ENCODE measurements at regions of chr16 and their contacts with region 1.

Region 1: DNA sequence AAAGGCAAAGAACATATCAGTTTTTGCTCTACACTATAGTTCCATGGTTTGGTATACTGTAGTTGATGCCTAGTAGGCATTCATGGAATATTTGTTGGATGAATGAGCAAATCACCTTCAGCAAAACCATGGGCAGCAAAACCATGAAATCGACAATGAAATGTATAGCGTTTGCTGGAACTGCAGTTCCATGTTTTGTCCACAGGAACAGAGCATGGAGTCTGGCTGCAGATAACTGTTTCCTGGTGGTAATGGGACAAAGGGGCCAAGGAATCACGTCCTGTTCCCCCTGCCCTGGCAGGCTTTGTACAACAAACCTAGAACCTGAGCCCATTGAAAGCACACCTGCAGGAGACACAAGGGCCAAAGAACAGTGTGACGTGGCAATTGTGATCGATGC is 101.1 kb downstream of the USP31 start:
- DNase-seq: no peak
- ATAC-seq: no peak
- H3K4me3 ChIP-seq: no peak overlapping the region
- H3K4me3 Mint-ChIP-seq: no peak overlapping the region
- H3K27ac ChIP-seq: no peak overlapping the region
- H3K27ac Mint-ChIP-seq: no peak overlapping the region
- H3K4me1 ChIP-seq: no peaks in the 10 kb centered on the region
- H3K4me1 Mint-ChIP-seq: no peaks in the 10 kb centered on the region
- H3K27me3 ChIP-seq: peaks cover 0 to 3% of the 10 kb centered on the region in 2 experiments
- H3K27me3 Mint-ChIP-seq: peaks cover 53% of the 10 kb centered on the region
- CTCF ChIP-seq: no peak

Region 2: DNA sequence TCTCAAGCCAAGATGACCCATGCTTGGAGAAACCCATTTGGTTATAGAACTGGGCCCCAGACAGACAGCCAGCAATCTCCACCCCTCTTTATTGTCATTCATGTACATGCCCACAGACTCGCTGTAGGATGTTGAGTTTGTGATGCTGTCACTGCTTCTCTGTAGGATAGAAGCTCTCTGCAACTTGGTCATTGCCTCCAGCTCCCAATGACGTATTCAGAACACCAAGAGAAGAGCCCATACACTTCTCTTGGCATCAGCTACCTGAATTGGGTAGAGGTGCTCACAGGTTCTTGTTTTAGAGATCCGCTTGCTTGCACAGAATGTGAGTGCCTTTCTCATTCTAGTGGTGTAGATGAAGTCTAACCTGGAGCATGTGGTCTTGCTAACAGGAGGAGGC is 218.2 kb before region 1 on chr16:
- CTCF ChIA-PET with region 1: no interaction called
- POLR2A ChIA-PET with region 1: no interaction called
- intact Hi-C with region 1: no loop called
- DNase-seq: no peak
- ATAC-seq: no peak
- H3K4me3 ChIP-seq: no peak overlapping the region
- H3K4me3 Mint-ChIP-seq: no peak overlapping the region
- H3K27ac ChIP-seq: no peak overlapping the region
- H3K27ac Mint-ChIP-seq: no peak overlapping the region
- H3K4me1 ChIP-seq: no peaks in the 10 kb centered on the region
- H3K4me1 Mint-ChIP-seq: no peaks in the 10 kb centered on the region
- H3K27me3 ChIP-seq: no peaks in the 10 kb centered on the region
- H3K27me3 Mint-ChIP-seq: peaks cover 22% of the 10 kb centered on the region
- CTCF ChIP-seq: no peak

Region 3: GRCh38 chr16:23026784-23027362 is 21.3 kb before region 1 on chr16:
- CTCF ChIA-PET with region 1: no interaction called
- POLR2A ChIA-PET with region 1: no interaction called
- intact Hi-C with region 1: loop called in 1 of 2 experiments (anchors 1 kb)
- DNase-seq: no peak
- ATAC-seq: no peak
- H3K4me3 ChIP-seq: no peak overlapping the region
- H3K4me3 Mint-ChIP-seq: no peak overlapping the region
- H3K27ac ChIP-seq: no peak overlapping the region
- H3K27ac Mint-ChIP-seq: no peak overlapping the region
- H3K4me1 ChIP-seq: no peaks in the 10 kb centered on the region
- H3K4me1 Mint-ChIP-seq: no peaks in the 10 kb centered on the region
- H3K27me3 ChIP-seq: no peaks in the 10 kb centered on the region
- H3K27me3 Mint-ChIP-seq: peaks cover 24% of the 10 kb centered on the region
- CTCF ChIP-seq: no peak

Measured in CD8-positive, alpha-beta T cell (primary cell).